CD4-positive, alpha-beta T cell (primary cell): ENCODE measurements at regions of chr6 and their contacts with region 1.

Region 1: GRCh38 chr6:152244998-152245630 is 392.0 kb downstream of the SYNE1 start:
- DNase-seq: no peak
- ATAC-seq: no peak
- H3K4me3 ChIP-seq: no peak overlapping the region
- H3K4me3 Mint-ChIP-seq: no peak overlapping the region
- H3K27ac ChIP-seq: no peak overlapping the region
- H3K27ac Mint-ChIP-seq: no peak overlapping the region
- H3K4me1 ChIP-seq: no peaks in the 10 kb centered on the region
- H3K4me1 Mint-ChIP-seq: no peaks in the 10 kb centered on the region
- H3K27me3 ChIP-seq: no peaks in the 10 kb centered on the region
- H3K27me3 Mint-ChIP-seq: no peaks in the 10 kb centered on the region
- CTCF ChIP-seq: no peak

Region 2: GRCh38 chr6:152151920-152152319 is 93.2 kb before region 1 on chr6:
- CTCF ChIA-PET with region 1: no interaction called
- POLR2A ChIA-PET with region 1: no interaction called
- intact Hi-C with region 1: loop called in 1 of 2 experiments (anchors 5 kb)
- DNase-seq: no peak
- ATAC-seq: no peak
- H3K4me3 ChIP-seq: no peak overlapping the region
- H3K4me3 Mint-ChIP-seq: no peak overlapping the region
- H3K27ac ChIP-seq: no peak overlapping the region
- H3K27ac Mint-ChIP-seq: peak overlapping the region; percentile 47
- H3K4me1 ChIP-seq: no peaks in the 10 kb centered on the region
- H3K4me1 Mint-ChIP-seq: no peaks in the 10 kb centered on the region
- H3K27me3 ChIP-seq: no peaks in the 10 kb centered on the region
- H3K27me3 Mint-ChIP-seq: no peaks in the 10 kb centered on the region
- CTCF ChIP-seq: no peak

Region 3: DNA sequence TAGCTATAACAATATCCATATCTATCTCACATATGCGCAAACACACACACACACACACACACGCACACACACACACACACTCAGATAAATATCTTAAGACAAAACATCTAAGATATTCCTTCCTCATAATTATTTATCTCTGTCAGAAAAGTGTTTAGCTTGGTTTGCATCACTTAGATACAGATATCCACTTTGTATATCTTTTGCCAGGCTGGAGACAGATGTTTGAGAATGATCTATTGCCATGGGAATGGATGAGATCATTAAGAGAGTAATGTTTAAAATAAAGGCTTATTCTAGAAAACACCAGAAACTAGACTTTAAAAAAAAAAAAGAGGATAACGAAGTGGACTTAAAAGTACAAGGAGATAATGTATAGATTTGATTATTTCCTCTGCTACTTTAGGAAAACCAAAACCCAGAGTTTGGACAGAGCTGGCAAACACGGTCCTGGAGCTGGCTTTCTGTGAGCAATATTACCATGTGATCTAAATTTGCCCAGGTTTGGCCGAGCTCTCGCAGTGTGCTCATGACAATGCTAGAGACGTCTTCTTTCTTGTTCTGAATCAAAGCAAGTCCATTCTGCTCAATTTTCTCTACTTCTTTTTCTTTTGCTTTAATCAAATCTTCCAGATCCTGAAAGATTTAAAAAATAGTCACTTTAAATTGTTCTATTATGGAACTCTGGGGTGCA is 19.7 kb before region 1 on chr6:
- CTCF ChIA-PET with region 1: no interaction called
- POLR2A ChIA-PET with region 1: no interaction called
- intact Hi-C with region 1: no loop called
- DNase-seq: no peak
- ATAC-seq: no peak
- H3K4me3 ChIP-seq: no peak overlapping the region
- H3K4me3 Mint-ChIP-seq: no peak overlapping the region
- H3K27ac ChIP-seq: no peak overlapping the region
- H3K27ac Mint-ChIP-seq: no peak overlapping the region
- H3K4me1 ChIP-seq: no peaks in the 10 kb centered on the region
- H3K4me1 Mint-ChIP-seq: no peaks in the 10 kb centered on the region
- H3K27me3 ChIP-seq: no peaks in the 10 kb centered on the region
- H3K27me3 Mint-ChIP-seq: no peaks in the 10 kb centered on the region
- CTCF ChIP-seq: no peak